HEK293T (cell line): ENCODE measurements at regions of chr11 and their contacts with region 1.

Region 1: GRCh38 chr11:61173456-61173855 is 12.2 kb upstream of the VPS37C start:
- DNase-seq: no peak

Region 2: GRCh38 chr11:60447846-60448245 is 725.6 kb before region 1 on chr11:
- CTCF ChIA-PET with region 1: no interaction called
- POLR2A ChIA-PET with region 1: no interaction called
- DNase-seq: no peak

Region 3: DNA sequence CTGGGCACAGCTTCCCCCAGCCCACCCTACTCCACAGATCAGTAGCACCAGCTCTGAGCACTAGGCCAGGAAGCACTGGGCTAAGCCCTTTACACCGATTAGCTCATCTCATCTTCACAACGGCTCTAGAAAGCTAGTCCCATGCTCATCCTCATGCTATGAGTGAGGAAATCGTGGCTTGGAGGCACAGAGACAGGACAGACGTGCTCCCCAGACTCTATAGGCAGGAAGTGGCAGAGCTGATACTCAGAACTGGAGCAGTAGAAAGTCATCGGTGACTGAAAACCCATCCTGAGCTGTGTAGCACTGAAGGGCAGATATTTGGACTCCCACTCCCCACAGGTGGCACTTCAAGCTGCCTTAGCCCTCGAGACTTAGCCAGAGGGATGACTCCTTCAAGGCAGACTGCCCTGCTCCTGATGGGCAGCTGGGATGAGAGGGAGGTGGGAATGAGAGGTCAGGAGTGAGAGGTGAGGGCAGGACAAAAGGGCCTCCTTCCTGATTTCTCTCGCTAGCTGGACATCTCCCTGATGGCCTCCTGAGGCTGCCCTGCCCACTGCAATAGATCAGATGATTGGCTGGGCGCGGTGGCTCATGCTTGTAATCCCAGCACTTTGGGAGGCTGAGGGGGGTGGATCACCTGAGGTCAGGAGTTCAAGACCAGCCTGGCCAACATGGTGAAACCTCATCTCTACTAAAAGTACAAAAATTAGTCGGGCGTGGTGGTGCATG is 61.5 kb before region 1 on chr11:
- CTCF ChIA-PET with region 1: no interaction called
- POLR2A ChIA-PET with region 1: no interaction called
- DNase-seq: no peak

Region 4: DNA sequence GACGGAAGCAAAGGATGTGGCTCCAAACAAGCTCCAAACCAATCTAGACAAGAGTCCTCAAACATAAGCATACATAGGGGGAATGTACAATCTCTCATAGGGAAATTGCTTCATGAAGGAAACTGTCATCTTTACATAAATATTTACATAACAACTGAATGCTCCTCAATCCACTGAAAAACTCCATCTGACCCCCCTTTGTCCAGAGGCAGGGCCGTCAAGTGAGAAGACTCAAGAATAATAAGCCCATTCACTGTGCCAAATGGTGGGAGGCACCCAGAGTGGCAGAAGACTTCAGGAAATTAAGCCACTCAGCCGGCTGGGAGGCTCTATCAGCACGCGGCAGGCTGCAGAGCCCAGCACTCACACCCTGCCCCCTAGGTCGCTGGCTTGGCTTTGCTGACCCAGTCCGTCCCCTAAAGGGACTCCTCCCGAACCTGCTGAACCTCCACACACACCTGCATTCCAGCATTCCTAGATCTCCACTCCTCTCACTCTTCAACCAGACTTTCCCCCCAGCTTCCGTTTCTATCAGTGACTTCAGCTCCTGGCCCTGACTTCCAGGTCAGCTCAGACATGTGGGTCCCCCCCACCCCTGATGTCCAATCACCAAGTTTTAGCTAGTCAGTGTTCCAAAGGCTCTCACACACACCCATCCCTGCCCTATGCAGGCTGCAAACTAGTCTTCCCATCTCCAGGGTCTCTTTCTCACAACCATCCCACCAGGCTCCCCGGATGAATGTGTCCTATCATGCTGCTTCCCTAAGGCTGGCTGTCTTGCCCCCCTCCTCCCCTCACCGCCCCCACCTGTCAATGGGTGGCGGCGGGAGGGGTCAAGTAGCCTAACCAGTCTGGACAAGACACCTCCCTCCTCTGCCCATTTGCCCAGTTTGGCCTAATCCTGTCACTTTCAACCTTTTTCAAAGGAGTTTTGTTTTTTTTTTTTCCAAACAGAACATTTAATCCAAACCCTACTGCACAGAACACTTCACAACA is 23.5 kb before region 1 on chr11:
- CTCF ChIA-PET with region 1: no interaction called
- POLR2A ChIA-PET with region 1: no interaction called
- DNase-seq: no peak

Region 5: DNA sequence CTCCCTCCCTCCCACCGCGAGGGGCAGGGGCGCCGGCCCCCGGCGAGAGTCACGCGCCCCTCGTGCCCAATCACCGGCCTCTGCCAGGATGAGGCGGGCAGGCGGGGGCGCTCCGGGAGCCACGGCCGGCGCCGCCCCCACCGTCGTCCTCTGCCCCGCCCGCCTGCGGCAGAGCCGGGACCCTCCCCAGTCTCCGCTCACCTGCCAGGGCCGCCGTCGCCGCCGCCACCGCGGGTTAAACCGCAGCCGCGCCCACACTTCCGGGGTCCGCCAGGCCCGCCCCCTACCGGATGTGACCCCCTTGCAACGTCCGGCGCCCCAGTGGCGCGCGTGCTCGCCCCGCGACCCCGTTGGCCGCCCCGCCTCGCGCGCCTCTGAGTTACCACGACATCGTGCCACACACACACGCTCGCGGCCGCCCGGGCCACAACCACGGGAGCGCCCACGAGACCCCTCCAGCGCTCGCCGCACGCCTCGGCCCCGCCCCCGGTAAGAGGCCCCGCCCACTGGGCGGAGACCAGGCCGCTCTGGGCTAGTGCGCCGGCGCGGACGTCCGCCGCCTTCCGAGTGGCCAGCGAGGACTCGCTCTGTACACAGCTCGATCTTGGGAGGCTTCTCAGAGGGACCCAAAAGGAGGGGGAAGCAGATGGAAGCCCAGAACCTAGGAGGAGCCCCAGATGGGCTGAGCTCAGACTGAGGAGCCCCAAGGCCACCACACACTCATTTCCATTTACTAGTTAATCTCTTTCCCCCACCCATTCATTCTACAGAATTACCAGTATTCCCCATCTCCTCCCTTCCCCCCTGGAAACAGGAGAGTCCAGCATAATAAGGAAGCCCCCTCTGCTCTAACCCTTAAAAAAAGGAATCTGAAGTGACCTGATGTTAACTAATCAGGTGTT is 12.0 kb before region 1 on chr11 and contains the start of gene VPS37C:
- CTCF ChIA-PET with region 1: interaction called, 6 read pairs
- POLR2A ChIA-PET with region 1: interaction called, 10 read pairs
- DNase-seq: peak; percentile 97